GM10248 (cell line): ENCODE measurements at regions of chr17 and their contacts with region 1.

Region 1: DNA sequence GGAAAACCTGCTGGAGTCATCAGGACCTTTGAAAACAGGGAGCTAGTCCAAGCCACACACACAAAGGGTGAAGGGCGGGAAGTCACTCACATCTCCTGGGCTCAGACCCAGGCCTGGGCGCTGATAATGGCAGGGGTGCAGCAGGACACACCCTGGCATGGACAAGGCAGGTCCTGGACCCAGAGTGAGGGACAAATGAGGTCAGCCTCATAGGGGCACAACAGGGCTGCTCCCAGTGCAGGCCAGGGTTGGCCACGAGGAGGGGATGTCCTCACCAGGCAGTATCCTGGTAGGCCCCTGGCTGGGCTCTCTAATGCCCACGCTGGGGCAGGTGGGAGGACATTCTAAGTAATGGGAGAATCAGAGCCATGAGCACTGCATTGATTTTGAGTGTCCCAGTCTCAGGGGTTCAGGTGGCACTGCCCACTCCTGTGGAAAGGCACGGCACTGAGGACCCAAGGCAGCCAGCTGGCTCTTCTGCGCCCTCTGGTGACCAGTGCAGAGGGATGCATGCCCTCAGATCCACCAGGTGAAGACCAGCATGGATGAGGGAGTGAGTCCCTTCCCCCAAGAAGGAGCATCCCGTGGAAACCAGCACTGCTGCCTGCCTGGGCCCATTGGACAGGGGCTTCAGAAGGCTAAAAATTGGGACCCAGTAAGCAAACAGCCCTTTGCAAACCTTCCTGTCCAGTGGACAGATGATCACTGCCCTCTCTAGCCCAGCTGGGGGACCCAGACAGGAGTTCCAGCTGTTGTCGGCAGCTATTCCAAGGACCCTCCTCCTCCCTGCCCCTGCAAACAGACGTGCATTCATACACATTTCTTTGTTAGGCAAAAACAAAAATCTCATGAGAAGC is 23.4 kb upstream of the SREBF1 start:
- DNase-seq: peak; percentile 86
- CTCF ChIP-seq: peak; percentile 94

Region 2: GRCh38 chr17:17849845-17850373 is 10.2 kb before region 1 on chr17:
- CTCF ChIA-PET with region 1: interaction called, 37 read pairs
- POLR2A ChIA-PET with region 1: no interaction called
- DNase-seq: peak; percentile 78
- CTCF ChIP-seq: peak; percentile 9

Region 3: DNA sequence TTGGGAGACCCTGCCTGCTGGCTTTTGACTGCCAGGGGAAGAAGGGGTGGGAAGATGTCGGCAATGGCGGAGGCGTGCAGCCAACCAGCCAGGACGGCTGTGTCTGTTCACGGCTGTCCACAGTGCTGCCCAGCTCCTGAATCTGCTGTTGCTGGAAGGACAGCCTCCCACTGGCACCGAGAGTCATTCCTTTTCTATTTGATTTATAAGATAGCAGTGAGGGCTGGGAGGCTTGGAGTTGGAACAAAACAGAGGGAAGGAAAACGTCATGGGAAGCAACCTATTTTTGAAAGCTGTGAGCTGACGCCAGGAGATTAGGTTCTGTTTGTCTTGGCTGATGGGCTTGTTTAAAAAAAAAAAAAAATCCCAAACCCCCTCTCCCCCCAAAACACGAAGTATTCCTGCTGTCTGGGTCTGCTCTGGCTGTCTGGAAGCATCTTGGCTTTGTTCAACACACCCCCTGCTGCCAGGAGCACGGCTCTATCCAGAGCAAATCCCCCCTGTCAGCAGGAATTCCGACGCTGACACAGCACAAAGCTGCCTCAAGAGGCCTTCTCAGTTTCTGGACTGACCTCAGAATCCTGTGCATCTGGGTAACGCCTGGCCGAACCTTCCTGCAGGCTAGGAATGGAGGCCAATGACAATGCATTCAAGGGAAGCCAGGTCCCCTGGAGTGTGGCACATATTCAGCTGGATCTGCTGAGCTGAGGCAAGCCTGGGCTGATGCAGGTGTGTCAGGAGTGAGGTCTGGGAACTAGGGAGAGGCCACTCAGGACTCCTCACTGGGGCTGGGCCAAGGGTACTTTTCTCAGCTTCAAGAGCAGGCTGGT is 17.6 kb after region 1 on chr17:
- CTCF ChIA-PET with region 1: interaction called, 14 read pairs
- POLR2A ChIA-PET with region 1: no interaction called
- DNase-seq: no peak
- CTCF ChIP-seq: no peak

Region 4: DNA sequence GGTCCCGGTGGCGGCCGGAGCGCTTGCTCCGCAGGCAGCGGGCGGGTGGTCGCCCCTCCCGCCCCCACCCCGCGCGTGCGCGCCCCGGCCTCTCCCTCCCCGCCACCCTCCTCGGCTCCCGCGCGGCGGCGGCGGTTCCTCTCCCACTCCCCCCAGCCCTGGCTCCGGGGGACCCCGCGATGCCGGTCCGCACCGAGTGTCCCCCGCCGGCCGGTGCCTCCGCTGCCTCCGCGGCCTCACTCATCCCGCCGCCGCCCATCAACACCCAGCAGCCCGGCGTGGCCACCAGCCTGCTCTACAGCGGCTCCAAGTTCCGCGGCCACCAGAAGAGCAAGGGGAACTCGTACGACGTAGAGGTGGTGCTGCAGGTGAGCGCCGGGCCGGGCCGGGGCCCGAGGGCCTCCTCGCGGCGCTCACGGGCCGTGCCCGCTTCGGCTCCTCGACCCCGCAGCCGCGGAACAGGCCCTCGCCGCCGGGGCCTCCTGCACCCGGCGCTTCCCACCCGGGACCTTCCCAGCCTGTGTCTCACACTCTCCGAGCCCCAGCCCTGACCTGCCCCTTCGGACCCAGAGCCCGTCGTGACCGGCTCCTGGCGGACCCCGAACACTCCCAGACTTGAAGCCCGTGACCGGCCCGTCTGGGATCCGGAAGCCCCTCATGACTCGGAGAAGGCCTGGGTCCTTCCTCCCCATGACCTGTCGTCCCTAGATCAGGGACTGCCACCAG is 179.6 kb after region 1 on chr17:
- CTCF ChIA-PET with region 1: no interaction called
- POLR2A ChIA-PET with region 1: no interaction called
- DNase-seq: peak; percentile 71
- CTCF ChIP-seq: no peak